ENCODE measurements at regions of chr3 and their contacts with region 1.

Region 1: DNA sequence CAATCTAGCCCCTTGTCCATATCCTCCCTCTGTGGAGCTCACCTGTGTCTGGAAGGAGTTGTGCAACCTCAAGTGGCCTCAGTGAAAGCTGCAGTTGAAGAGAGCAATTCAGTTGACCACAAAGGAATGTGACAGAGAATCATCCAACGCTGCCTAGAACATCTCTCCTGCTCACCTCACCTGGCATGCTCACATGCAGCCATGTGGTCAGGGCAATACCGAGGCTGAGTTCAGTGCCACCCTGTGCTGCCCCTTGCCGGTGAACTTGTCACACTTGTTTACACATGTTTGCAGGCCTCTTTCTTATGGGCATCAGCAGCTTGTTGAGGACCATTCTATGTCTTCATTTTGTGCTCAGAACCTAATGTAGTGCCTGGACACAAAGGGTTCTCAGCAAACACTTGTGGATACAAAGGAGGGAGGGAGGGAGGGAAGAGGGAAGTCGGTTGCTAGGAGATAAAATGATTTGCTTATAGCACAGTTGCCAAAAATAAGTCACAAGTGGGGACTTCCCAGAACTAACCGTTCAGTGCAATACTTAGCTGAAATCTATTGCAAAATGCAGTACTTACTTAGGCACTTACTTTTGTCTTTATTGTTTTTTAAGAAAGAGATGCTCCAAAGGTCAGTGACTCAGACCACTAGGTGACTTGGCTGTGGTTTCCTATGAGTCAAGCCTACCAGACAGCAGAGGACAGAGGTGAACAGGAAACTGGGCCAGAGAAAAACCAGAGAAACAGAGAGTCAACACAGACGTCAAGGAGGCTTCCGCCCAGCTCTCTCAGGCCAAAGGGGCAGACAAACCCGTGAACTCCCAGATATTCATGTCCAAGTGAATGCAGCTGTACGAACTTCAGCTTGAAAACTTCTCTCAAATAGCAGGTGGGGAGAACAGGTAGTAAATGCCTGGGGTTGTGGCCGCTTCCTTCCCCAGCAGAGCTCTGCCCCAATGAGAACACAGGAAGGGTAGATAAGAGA is 227.8 kb upstream of the CTNNB1 start:
- DNase-seq: peak; percentile 98
- H3K4me3 Mint-ChIP-seq: peak overlapping the region; percentile 5
- H3K27ac Mint-ChIP-seq: peak overlapping the region; percentile 98
- H3K4me1 Mint-ChIP-seq: peaks cover 20% of the 10 kb centered on the region
- H3K27me3 Mint-ChIP-seq: no peaks in the 10 kb centered on the region
- CTCF ChIP-seq: peak; percentile 11

Region 2: DNA sequence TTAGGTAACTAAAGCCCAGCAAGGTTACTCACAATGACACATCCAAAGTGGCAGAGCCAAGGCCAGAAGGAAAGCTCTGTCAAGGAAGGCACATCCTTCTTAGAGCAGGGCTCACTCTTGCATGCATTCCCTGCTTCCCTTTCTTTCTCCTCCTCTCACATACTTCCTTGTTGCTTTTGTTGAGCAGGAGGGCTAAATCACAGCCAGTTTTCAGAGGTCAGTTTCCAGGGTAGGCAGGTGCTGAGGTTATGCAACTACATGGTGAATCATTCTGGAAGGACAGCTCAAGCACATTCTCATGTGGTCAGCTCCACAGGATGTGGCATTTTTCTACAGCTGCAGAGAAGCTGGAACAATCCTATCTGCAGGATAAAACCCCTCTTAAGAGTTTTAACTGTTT is 171.1 kb before region 1 on chr3:
- CTCF ChIA-PET with region 1: interaction called, 3 read pairs
- POLR2A ChIA-PET with region 1: no interaction called
- intact Hi-C with region 1: loop called (anchors 10 kb)
- DNase-seq: peak; percentile 95
- H3K4me3 Mint-ChIP-seq: peak overlapping the region; percentile 37
- H3K27ac Mint-ChIP-seq: peak overlapping the region; percentile 52
- H3K4me1 Mint-ChIP-seq: peaks cover 29% of the 10 kb centered on the region
- H3K27me3 Mint-ChIP-seq: no peaks in the 10 kb centered on the region
- CTCF ChIP-seq: no peak

Region 3: DNA sequence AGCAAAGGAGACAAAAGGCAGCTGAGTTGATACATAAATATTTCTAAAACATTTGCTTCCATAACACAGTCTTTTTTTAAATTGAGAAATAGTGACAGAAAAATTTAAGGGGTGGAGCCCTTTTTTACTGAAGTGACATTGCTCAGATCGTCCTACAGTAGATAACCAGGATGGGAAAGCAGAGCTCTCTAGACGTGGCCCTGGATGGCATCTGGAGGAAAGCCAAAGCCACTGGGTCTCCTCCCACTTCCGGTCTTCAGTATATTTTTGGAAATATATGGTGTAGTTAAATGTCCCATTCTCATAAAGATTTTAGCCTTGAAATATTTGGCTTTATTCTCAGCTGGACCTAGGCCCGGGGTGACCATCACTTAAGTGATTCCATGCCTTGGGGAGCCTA is 120.6 kb before region 1 on chr3:
- CTCF ChIA-PET with region 1: no interaction called
- POLR2A ChIA-PET with region 1: no interaction called
- intact Hi-C with region 1: no loop called
- DNase-seq: no peak
- H3K4me3 Mint-ChIP-seq: no peak overlapping the region
- H3K27ac Mint-ChIP-seq: no peak overlapping the region
- H3K4me1 Mint-ChIP-seq: no peaks in the 10 kb centered on the region
- H3K27me3 Mint-ChIP-seq: no peaks in the 10 kb centered on the region
- CTCF ChIP-seq: no peak

Region 4: GRCh38 chr3:40877631-40878463 is 93.6 kb before region 1 on chr3:
- CTCF ChIA-PET with region 1: no interaction called
- POLR2A ChIA-PET with region 1: no interaction called
- intact Hi-C with region 1: loop called (anchors 2 kb)
- DNase-seq: peak; percentile 94
- H3K4me3 Mint-ChIP-seq: no peak overlapping the region
- H3K27ac Mint-ChIP-seq: peak overlapping the region; percentile 4
- H3K4me1 Mint-ChIP-seq: peaks cover 34% of the 10 kb centered on the region
- H3K27me3 Mint-ChIP-seq: no peaks in the 10 kb centered on the region
- CTCF ChIP-seq: no peak

Region 5: DNA sequence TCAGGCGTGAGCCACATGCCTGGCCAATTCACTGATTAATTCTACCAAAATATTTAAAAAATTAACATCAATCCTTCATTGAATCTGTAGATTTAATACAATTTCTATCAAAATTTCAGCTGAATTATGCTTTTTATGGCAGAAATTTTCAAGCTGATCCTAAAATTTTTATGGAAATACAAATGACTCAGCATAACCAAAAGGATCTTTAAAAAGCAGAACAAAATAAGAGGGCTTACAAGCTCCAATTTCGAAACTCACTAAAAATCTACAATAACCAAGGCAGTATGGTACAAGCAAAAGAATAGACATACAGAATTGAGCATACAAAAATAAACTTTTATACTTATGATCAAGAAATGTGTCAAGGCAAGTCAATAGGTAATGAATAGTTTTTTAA is 47.4 kb after region 1 on chr3:
- CTCF ChIA-PET with region 1: no interaction called
- POLR2A ChIA-PET with region 1: no interaction called
- intact Hi-C with region 1: no loop called
- DNase-seq: no peak
- H3K4me3 Mint-ChIP-seq: no peak overlapping the region
- H3K27ac Mint-ChIP-seq: no peak overlapping the region
- H3K4me1 Mint-ChIP-seq: no peaks in the 10 kb centered on the region
- H3K27me3 Mint-ChIP-seq: no peaks in the 10 kb centered on the region
- CTCF ChIP-seq: no peak

Region 6: GRCh38 chr3:41117398-41117870 is 146.0 kb after region 1 on chr3:
- CTCF ChIA-PET with region 1: no interaction called
- POLR2A ChIA-PET with region 1: no interaction called
- intact Hi-C with region 1: loop called (anchors 1 kb)
- DNase-seq: peak; percentile 98
- H3K4me3 Mint-ChIP-seq: peak overlapping the region; percentile 24
- H3K27ac Mint-ChIP-seq: peak overlapping the region; percentile 91
- H3K4me1 Mint-ChIP-seq: peaks cover 15% of the 10 kb centered on the region
- H3K27me3 Mint-ChIP-seq: no peaks in the 10 kb centered on the region
- CTCF ChIP-seq: no peak